Activated T-helper 1 cell treated with anti-CD3 and anti-CD28 coated beads, Interleukin-12 subunit alpha, Interleukin-12 subunit beta, Interleukin-2, Interleukin-4 antibody, amounts not matched to agents 30 ng/mL and 10 ng/mL and 1 ng/mL, durations not matched to agents 14 hours and 24 hours and 36 hours (primary cell): ENCODE measurements at regions of chrX and their contacts with region 1.

Region 1: GRCh38 chrX:150693775-150694574 is 779 bp downstream of the MTMR1 start:
- DNase-seq: peak; percentile 66
- H3K4me3 Mint-ChIP-seq: peak overlapping the region; percentile 91
- H3K27ac Mint-ChIP-seq: peak overlapping the region; percentile 97
- H3K4me1 Mint-ChIP-seq: peaks cover 65% of the 10 kb centered on the region
- H3K27me3 Mint-ChIP-seq: no peaks in the 10 kb centered on the region

Region 2: DNA sequence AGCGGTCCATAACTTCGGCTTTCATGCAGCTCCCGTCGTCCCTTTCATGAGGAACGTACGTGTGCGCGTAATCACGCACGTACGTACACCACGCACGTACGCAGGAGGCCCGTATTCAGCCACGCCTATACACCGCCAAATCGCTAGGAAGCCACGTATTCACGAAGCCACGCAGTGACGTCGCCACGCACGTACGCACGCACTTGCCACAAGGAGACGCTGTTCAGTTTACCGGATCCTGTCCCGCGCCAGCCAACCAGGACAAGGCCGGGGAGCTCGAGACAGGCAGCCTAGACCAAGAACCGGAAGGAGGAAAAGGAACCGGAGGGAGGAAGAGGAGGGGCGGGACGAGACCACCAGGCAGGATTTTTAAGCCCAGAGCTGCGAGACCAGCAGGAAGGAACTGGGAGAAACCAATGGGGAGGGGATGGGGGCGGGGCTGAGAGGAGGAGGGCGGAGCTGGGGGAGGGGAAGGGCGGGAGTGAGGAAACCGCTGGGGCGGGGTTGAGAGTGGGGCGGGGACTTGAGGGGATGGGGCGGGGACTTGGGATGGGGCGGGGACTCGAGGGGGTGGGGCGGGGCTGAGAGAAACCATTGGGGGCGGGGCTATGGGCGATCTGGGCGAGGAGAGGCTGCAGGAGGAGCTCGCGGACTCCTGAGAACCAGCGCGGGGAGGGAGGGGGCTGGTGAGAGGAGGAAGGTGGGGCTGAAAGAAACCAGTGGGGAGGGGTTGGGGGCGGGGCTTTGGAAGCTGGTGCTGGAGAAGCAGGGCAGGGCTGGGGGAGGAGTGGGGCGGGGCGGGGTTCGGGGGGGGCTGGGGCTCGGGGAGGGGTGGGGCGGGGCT is 755.3 kb before region 1 on chrX and contains the start of gene EOLA2:
- intact Hi-C with region 1: loop called (anchors 10 kb)
- DNase-seq: peak; percentile 89
- H3K4me3 Mint-ChIP-seq: peak within 1 kb of the TSS; percentile 92
- H3K27ac Mint-ChIP-seq: peak within 1 kb of the TSS; percentile 100
- H3K4me1 Mint-ChIP-seq: peaks cover 4% of the 10 kb centered on the region
- H3K27me3 Mint-ChIP-seq: no peaks in the 10 kb centered on the region
- total RNA-seq, gene EOLA2: 54.2 and 63.3 TPM in 2 replicates

Region 3: DNA sequence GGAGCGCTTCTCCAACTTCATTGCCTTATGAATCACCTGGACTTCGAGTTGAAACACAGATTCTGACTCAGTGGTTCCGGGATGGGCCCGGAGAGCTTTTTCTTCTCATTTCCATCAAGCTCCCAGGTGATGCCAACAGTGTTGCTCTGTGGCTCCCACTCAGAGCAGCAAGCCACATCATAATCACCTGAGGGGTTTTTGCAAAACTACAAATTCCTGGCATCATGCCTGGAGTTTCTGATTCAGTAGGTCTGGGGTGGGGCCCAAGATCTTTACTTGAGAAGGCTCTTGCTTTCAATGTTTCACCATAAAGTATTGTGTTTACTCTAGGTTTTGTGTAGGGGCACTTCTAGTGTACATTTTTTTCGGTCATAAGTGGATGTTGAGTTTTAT is 118.6 kb before region 1 on chrX:
- intact Hi-C with region 1: loop called (anchors 2 kb)
- DNase-seq: peak; percentile 16
- H3K4me3 Mint-ChIP-seq: peak overlapping the region; percentile 76
- H3K27ac Mint-ChIP-seq: peak overlapping the region; percentile 93
- H3K4me1 Mint-ChIP-seq: peaks cover 80% of the 10 kb centered on the region
- H3K27me3 Mint-ChIP-seq: no peaks in the 10 kb centered on the region

Region 4: GRCh38 chrX:150704030-150704613 is 10.1 kb after region 1 on chrX:
- intact Hi-C with region 1: loop called (anchors 1 kb)
- DNase-seq: no peak
- H3K4me3 Mint-ChIP-seq: no peak overlapping the region
- H3K27ac Mint-ChIP-seq: peak overlapping the region; percentile 68
- H3K4me1 Mint-ChIP-seq: peaks cover 28% of the 10 kb centered on the region
- H3K27me3 Mint-ChIP-seq: no peaks in the 10 kb centered on the region

Region 5: DNA sequence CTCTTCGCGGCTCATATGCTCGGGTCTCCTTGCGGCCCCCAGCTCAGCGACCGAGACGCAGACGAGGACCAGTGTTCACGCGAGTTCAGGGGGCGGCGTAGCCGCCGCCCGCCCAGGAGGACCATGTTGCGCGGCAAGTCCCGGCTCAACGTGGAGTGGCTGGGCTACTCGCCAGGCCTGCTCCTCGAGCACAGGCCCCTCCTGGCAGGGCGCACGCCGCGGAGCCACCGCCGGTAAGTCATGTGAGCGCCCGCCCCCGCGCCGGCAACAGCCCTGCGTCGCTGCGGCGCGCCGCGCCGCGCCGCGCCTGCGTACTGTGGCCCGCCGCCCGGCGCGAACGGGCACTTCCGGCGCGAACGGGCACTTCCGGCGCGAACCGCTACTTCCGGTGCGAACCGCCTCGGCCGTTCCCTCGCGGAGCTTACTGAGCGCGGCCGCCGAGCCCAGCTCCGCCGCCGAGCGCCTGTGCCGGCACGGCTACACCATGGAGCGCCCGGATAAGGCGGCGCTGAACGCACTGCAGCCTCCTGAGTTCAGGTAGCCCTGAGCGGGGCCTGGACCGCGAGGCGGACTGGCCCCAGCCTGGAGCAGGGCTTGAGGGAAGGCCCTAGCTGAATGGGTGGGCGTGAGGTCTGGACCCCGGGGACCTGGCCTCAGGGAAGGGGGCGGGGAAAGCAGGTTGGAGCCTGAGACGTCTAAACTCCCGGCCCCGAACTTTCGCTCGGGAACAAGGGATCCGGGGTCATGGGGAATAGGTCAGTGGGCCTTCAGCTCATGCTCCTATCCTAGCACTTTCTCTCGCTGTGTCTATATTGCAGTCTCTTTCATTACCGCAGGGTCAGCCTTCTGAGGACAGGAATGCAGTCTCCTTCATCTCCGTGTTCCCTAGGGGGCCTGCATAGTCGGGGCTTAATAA is 703.1 kb after region 1 on chrX and contains the start of gene VMA21:
- intact Hi-C with region 1: loop called (anchors 5 kb)
- DNase-seq: peak; percentile 79
- H3K4me3 Mint-ChIP-seq: peak within 1 kb of the TSS; percentile 93
- H3K27ac Mint-ChIP-seq: peak within 1 kb of the TSS; percentile 94
- H3K4me1 Mint-ChIP-seq: peaks cover 52% of the 10 kb centered on the region
- H3K27me3 Mint-ChIP-seq: peaks cover 3% of the 10 kb centered on the region
- total RNA-seq, gene VMA21: 39.4 and 49.2 TPM in 2 replicates